ENCODE measurements at regions of chr21 and their contacts with region 1.

Region 1: DNA sequence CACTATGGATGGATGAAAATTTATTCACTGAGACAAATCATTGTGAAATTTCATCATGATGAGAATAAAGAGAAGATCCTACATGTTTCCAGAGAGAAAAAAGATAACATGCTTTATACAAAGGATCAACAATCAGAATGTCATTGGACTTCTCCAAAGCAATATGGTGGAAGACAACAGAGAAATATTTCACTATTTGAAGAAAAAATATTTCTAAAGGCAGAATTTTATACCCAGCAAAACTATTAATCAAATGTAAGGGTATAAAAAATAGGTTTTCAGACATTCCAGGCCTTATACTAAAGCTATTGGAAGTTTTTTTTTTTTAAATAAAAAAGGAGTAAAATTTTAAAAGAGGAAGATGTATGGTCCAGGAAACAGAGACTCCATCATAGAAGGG is 100.6 kb upstream of the OLIG2 start:
- DNase-seq: no peak
- H3K4me3 ChIP-seq: no peak overlapping the region
- H3K27ac ChIP-seq: no peak overlapping the region
- H3K27me3 ChIP-seq: no peaks in the 10 kb centered on the region
- CTCF ChIP-seq: no peak

Region 2: DNA sequence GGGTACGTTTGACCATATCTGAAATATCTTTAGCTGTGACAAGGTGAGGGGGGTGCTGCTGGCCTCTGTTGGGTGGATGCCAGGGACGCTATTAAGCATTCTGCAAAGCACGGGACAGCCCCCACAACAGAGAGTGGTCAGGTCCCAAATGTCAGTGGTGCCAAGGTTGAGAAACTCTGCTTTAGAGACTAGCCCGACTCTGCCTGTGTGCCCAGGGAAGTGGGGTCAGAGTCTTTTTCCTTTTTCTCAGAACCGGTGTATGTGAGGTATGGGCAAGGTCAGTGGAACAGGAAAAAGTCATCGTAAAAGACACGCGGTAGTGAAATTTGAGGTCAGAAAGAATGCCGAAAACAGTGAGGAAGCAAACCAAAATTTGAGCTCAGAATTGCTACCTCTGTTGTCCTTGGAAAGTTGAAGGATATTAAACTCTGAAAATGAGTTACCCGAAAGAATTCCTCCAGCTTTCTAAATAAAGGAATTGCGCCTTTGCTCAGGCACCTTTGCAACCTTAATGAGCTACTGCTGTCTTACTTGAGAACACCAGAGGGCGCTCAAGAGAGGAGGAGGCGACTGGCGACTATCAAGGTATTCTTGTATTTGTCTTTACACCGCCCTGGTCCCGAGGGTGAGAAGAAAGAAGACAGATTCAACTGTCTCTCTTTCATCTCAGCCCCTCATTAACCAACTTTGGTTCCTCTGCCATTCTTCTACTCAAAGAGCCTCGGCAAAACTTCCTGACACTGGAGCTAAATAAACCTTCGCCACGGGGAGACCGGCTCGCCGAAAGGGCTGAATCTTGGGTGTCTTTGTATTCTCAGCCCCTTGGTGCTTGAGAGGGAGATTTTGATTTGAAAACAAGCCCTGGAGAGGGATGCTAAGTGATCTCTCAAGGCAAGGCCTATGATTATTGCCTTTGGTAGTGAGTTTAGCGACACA is 15.2 kb after region 1 on chr21:
- CTCF ChIA-PET with region 1: interaction called, 11 read pairs
- POLR2A ChIA-PET with region 1: no interaction called
- DNase-seq: peak; percentile 3
- H3K4me3 ChIP-seq: no peak overlapping the region
- H3K27ac ChIP-seq: no peak overlapping the region
- H3K27me3 ChIP-seq: peaks cover 2% of the 10 kb centered on the region
- CTCF ChIP-seq: peak; percentile 84